ENCODE measurements at regions of chr6 and their contacts with region 1.

Region 1: GRCh38 chr6:56902641-56903464 is 52.1 kb upstream of the BEND6 start:
- DNase-seq: peak; percentile 16
- H3K4me3 ChIP-seq: no peak overlapping the region
- CTCF ChIP-seq: peak; percentile 47

Region 2: DNA sequence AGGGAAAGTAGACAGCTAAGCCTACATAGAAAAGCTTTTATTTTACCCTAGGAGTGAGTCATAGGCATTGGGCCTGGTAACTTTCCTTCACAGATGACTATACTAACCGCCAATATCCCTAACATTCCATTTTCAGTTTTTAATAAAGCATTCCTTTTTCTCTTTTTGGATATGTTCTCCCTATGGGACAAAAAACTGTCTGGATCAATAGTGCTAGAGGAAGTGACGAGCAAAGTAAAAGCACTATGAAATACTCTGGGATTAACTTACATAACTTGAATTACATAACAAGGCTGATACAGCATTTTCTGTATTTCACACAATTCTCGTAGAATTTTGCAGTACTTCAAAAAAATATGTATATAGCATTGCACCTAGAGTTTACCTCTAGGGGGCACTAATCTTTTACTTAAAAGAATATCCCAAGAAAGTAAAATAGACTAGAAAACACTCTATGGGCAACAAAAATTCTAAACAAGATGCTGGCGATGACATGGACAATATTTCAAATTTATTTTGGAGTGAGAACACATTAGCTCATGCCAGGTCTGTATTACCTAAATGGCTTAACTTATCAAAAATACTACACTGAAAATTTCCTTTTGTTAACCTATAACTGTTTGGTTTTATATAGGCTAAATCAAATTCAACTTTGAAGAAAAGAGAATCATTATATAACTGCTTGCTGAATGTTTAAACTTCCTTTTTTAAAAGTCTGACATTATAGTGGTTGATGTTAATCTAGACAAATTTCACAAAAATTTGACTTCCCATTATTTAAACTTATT is 193.8 kb before region 1 on chr6:
- CTCF ChIA-PET with region 1: interaction called, 12 read pairs
- POLR2A ChIA-PET with region 1: no interaction called
- DNase-seq: no peak
- H3K4me3 ChIP-seq: no peak overlapping the region
- CTCF ChIP-seq: no peak

Region 3: DNA sequence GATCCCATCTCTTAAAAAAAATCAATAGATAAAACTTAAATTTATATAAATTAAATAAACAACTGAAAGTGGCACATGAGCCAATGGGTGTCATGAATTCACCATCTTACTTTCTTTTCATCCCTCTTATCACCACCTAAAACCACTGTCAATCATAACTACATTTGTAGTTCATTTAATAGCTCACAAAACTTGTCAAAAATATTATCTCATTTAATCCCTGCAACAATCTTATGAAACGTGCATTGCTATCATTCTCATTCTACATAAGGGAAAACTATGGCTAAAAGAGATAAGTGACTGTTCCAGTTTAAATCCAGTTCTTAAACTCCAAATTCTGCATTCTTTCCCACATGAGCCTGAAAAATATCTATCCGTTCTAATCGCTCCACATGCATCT is 28.5 kb before region 1 on chr6:
- CTCF ChIA-PET with region 1: interaction called, 10 read pairs
- POLR2A ChIA-PET with region 1: no interaction called
- DNase-seq: no peak
- H3K4me3 ChIP-seq: no peak overlapping the region
- CTCF ChIP-seq: no peak

Region 4: DNA sequence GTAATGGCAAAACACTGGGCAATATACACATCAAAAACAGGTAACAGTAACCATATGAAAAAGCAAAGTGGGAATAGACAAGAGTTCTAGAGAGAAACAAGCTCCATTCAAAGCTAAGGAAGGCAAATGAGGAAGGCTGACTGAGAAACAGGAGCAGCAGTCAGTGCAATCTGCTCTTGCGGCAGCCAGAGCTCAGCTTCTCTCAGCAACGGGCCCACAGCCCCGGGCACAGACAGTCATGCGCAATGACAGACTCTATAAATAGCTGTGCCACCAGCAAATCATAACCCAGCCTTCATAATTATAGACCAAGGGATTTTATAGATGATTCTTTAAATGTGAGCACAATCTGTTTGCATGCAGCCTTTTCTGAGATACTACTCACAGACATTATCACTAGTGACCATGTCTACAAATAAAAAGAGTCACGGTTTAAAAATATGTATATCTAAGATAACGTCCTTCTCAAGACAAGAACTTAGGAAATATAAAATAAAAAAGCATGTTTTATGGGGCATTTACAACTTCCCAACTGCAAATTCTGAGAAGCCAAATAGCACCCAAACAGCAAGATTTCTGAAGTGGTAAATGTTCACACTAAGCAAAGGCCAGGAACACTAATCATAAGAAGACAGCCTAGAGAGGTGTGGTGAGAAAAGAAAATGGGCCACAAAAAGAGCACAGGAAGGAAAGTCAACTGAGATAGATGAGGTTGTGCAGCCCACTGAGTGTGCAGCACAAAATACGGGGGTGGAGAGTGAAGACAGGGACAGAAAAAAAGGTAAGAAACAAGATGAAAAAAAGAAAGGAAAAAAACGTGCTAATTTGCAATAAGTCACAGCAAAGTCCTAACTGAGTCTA is 12.2 kb after region 1 on chr6:
- CTCF ChIA-PET with region 1: interaction called, 72 read pairs
- POLR2A ChIA-PET with region 1: interaction called, 3 read pairs
- DNase-seq: no peak
- H3K4me3 ChIP-seq: no peak overlapping the region
- CTCF ChIP-seq: no peak

Region 5: DNA sequence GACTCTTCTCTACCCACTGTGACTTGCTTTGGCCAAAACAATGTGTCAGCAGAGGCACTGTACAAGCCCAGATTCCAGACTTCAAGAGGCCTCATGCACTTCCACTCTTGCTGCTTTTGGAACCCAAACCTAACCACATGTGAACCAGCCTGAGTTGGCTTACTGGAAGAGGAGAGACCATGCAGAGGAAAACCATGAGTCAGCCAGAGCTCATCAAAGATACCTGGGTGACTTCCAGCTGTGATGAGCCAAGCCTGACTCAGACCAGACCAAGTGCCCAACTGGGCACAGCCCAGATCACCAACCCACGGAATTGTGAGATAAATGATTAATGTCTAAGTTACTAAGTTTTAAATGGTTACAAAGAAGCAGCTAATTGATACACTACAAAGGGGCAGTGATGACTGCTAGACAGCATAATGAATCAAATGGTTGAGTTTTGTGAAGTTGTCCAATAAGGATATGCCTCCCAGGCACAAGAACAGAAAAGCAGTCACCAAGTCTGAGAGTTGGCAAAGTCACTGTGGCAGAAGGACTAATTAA is 35.9 kb after region 1 on chr6:
- CTCF ChIA-PET with region 1: interaction called, 40 read pairs
- POLR2A ChIA-PET with region 1: no interaction called
- DNase-seq: peak; percentile 97
- H3K4me3 ChIP-seq: no peak overlapping the region
- CTCF ChIP-seq: no peak

Region 6: DNA sequence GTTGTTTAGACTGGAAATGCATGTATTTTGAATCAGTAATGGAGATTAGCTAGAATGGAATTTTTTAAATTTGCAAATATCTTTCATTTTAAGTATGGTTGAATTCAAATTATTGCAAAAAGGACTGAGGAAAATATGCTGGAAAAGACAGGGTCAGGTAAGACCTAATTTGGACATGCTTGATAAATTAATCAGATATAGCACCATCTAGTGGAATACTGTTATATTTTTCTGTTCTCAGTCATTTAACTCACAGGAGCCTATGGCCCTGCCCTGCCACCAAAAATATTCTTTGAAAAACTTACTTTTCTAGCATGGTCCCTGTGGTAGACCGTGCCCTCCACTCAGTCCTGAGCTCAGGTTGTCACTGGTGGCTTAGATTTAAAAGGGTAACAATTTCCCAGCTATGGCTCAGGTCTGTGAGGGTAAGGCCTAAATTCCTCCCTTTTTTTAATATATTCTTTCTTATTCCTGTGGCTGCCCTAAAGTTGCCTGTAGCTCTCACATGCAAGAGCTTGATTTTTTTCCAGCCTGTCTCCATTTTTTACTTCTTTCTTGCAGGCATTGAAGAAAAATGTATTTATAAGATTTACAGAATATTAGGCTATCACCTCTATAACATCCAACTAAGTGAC is 118.3 kb after region 1 on chr6:
- CTCF ChIA-PET with region 1: interaction called, 127 read pairs
- POLR2A ChIA-PET with region 1: no interaction called
- DNase-seq: peak; percentile 3
- H3K4me3 ChIP-seq: no peak overlapping the region
- CTCF ChIP-seq: peak; percentile 19

Region 7: DNA sequence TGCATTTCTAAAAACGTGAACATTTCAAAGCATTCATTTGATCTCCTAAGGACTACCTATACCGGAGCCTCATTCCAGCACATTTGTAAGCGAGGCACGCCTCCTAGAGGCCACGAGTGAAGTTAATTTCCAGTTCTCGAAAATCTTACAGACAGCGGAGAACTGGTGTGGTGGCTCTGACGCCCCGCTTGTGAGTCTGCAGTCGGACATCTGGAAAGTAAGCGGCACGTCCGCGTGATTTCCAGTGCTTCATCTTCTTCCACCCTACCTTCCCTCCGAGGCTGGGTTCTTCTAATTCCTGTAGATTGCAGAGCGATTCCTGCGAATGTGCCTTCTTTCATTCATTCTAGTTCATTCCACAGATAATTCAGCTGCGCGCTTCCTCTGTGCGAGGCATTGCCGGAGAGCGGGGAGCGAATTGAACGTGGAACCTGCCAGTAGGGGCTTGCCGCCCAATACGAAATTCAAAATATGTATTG is 413.8 kb after region 1 on chr6:
- CTCF ChIA-PET with region 1: interaction called, 162 read pairs
- POLR2A ChIA-PET with region 1: no interaction called
- DNase-seq: peak; percentile 65
- H3K4me3 ChIP-seq: peak overlapping the region; percentile 87
- CTCF ChIP-seq: peak; percentile 66